OCI-LY7 (cell line): ENCODE measurements at regions of chr6 and their contacts with region 1.

Region 1: GRCh38 chr6:9732056-9732455 is 682.8 kb downstream of the TFAP2A start:
- DNase-seq: no peak
- H3K4me3 ChIP-seq: no peak overlapping the region
- H3K27ac ChIP-seq: no peak overlapping the region
- H3K4me1 ChIP-seq: no peaks in the 10 kb centered on the region
- CTCF ChIP-seq: no peak

Region 2: GRCh38 chr6:9334979-9335378 is 397.1 kb before region 1 on chr6:
- CTCF ChIA-PET with region 1: no interaction called
- POLR2A ChIA-PET with region 1: no interaction called
- intact Hi-C with region 1: no loop called
- DNase-seq: no peak
- H3K4me3 ChIP-seq: no peak overlapping the region
- H3K27ac ChIP-seq: no peak overlapping the region
- H3K4me1 ChIP-seq: no peaks in the 10 kb centered on the region
- CTCF ChIP-seq: no peak

Region 3: GRCh38 chr6:9745966-9746365 is 13.9 kb after region 1 on chr6:
- CTCF ChIA-PET with region 1: no interaction called
- POLR2A ChIA-PET with region 1: no interaction called
- intact Hi-C with region 1: no loop called
- DNase-seq: no peak
- H3K4me3 ChIP-seq: no peak overlapping the region
- H3K27ac ChIP-seq: no peak overlapping the region
- H3K4me1 ChIP-seq: no peaks in the 10 kb centered on the region
- CTCF ChIP-seq: no peak

Region 4: GRCh38 chr6:9783567-9783966 is 51.5 kb after region 1 on chr6:
- CTCF ChIA-PET with region 1: no interaction called
- POLR2A ChIA-PET with region 1: no interaction called
- intact Hi-C with region 1: loop called (anchors 2 kb)
- DNase-seq: no peak
- H3K4me3 ChIP-seq: no peak overlapping the region
- H3K27ac ChIP-seq: no peak overlapping the region
- H3K4me1 ChIP-seq: no peaks in the 10 kb centered on the region
- CTCF ChIP-seq: no peak

Region 5: DNA sequence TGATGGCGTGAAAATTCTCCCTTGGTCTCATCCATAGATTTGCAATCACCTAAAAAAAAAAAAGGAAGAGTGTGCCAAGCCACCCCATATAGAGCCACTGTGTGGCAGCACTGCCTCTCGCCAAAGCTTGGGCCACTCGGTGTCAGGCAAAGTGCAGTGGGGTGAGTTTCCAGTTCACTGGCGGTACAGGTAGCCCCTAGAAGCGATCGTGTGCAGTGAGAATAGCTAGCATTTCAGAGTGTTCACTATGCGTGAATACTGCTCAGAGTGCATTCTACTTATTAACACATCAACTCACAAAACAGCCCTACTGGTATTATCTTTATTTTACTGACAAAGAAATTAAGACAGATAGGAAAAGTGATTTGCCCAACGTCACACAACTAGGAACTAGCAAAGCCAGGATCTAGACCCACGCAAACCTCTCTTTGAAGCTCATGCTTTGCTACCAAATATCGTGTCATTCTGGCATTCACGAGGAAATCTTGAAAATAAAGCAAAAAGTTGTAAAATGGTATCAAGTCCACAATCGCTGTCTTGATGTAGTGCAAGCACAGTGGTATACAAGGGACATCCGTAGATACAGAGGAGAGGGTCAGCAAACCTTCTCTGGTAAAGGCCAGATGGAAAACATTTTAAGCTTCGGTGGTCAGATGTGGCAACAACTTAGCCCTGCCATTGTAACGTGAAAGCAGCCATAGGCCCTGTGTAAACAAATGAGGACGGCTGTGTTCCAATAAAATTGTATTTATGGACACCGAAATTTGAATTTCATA is 778.7 kb after region 1 on chr6:
- CTCF ChIA-PET with region 1: no interaction called
- POLR2A ChIA-PET with region 1: no interaction called
- intact Hi-C with region 1: no loop called
- DNase-seq: peak; percentile 82
- H3K4me3 ChIP-seq: peak overlapping the region; percentile 11
- H3K27ac ChIP-seq: no peak overlapping the region
- H3K4me1 ChIP-seq: peaks cover 17% of the 10 kb centered on the region
- CTCF ChIP-seq: peak; percentile 96